A673 (cell line): ENCODE measurements at regions of chr1 and their contacts with region 1.

Region 1: DNA sequence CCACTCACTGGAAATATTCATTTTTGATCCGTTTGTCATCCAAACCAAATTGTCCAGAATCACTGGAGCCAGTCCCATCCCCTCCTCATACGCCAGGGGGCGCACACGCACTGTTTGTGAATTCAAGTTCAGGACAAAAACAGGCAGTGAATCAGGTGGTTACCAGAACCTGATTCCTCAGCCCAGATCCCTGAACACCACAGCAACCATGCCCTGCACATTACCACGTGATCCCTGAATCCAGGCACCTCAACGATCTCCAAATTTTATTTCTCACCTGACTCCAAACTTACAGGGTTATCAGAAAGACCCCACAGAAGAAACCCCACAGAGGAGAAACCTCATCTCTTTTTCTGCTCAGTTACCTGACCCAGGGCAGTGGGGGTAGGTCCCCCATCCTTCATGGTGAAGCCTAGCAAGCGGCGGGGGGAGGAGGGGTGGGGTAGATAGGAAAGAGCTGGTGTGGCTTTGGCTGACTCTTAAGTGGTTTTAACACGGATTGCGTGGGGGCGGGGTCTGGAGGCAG is 1.4 kb upstream of the PTPRF start:
- DNase-seq: peak; percentile 88
- H3K4me3 ChIP-seq: no peak overlapping the region
- H3K27ac ChIP-seq: no peak overlapping the region
- H3K4me1 ChIP-seq: peaks cover 17% of the 10 kb centered on the region
- H3K27me3 ChIP-seq: no peaks in the 10 kb centered on the region
- CTCF ChIP-seq: peak; percentile 97

Region 2: DNA sequence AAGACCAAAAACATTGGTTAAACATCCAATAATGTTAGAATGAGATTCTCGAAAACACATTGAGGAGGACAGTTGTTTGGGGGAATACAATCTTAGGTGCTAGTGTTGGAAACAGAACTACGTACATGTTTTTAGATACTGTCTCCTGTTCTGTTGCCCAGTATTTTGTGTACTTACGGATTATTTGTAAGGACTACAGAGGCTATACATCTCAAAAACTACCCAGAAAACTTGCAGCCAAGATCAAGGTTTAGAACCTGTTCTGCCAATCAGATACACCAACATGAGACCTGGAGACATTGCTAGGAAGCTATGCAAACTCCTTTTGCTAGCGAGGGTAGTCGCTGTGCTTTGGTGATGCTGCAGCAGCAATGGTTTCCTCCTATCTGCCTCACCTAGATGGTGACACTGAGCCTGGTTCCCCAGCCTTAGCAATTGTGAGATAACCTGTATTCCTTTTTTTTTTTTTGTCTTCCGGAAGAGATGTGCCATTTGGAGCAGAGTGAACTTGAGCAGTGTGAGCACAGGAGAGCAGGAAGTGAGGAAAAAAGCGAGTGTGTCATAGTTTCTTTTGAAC is 825.3 kb before region 1 on chr1:
- CTCF ChIA-PET with region 1: no interaction called
- POLR2A ChIA-PET with region 1: no interaction called
- intact Hi-C with region 1: no loop called
- DNase-seq: no peak
- H3K4me3 ChIP-seq: no peak overlapping the region
- H3K27ac ChIP-seq: no peak overlapping the region
- H3K4me1 ChIP-seq: no peaks in the 10 kb centered on the region
- H3K27me3 ChIP-seq: no peaks in the 10 kb centered on the region
- CTCF ChIP-seq: no peak

Region 3: DNA sequence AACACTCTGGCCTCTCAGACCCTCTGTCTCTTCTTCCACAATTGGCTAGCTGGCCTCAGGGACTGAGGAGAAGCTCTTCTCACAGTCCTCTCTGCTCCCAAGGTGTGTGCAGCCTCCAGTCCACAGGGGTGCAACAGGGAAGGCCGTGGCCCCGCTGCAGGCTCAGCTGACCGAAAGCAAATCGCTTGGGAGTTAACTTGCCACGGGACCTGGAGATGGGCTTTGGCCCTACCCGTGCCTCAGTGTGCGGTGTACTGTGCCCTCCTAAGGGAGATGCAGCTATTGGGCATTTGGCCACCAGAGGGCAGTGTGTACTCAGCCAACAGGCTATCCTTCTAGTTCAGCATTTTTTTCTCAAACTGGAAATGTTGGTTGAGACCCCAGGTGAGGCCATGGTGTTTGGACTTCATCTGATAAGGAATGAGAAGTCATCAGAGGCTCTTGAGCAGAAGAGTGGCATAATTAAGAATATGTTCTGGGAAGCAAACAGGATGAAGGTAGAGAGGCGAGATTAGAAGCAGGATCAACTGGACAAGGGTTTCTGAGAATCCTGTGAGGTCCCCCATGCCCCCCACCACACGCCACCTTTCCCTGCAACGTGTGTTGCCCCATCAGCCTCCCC is 302.0 kb before region 1 on chr1:
- CTCF ChIA-PET with region 1: no interaction called
- POLR2A ChIA-PET with region 1: no interaction called
- intact Hi-C with region 1: loop called (anchors 10 kb)
- DNase-seq: peak; percentile 82
- H3K4me3 ChIP-seq: no peak overlapping the region
- H3K27ac ChIP-seq: no peak overlapping the region
- H3K4me1 ChIP-seq: no peaks in the 10 kb centered on the region
- H3K27me3 ChIP-seq: no peaks in the 10 kb centered on the region
- CTCF ChIP-seq: peak; percentile 96

Region 4: DNA sequence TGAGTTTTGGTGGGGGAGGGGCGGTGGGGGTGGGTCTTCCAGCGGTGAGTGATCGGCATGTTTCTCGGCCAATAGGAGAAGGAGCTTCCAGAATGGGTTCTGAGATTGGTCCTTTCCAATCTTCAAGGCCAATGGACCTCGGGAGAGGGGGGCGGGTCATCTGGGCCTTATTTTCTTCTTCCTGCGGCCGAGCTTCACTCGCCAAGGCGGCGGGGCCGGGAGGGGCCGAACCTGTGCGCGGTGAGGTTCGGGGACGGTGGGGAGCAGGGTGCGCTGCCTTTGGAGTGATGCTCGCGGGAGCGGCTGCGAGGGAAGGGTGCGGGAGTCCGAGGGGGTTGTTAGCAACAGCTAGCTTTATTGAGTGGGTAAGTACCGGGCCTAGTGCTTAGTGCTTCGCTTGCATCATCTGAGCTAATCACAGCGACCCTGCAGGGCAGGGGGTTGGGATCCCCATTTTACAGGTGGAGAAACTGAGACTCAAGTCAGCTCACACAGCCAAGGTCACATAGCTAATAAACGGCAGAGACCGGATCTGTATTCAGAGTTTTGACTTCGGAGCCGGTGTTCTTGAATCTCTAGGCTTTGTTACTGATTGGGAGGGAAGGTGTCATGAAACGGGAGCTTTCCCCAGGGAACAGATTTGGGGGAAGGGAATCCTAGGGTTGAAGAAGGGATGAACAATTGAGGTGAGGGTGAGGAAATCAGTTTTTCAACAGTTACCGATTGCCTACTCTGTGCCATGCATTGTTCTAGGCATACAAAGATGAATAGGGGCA is 121.2 kb after region 1 on chr1:
- CTCF ChIA-PET with region 1: interaction called, 3 read pairs
- POLR2A ChIA-PET with region 1: no interaction called
- intact Hi-C with region 1: loop called (anchors 2 kb)
- DNase-seq: peak; percentile 98
- H3K4me3 ChIP-seq: peak overlapping the region; percentile 82
- H3K27ac ChIP-seq: peak overlapping the region; percentile 88
- H3K4me1 ChIP-seq: peaks cover 10% of the 10 kb centered on the region
- H3K27me3 ChIP-seq: no peaks in the 10 kb centered on the region
- CTCF ChIP-seq: no peak

Region 5: GRCh38 chr1:43678940-43679339 is 149.7 kb after region 1 on chr1:
- CTCF ChIA-PET with region 1: no interaction called
- POLR2A ChIA-PET with region 1: no interaction called
- intact Hi-C with region 1: no loop called
- DNase-seq: no peak
- H3K4me3 ChIP-seq: no peak overlapping the region
- H3K27ac ChIP-seq: no peak overlapping the region
- H3K4me1 ChIP-seq: no peaks in the 10 kb centered on the region
- H3K27me3 ChIP-seq: no peaks in the 10 kb centered on the region
- CTCF ChIP-seq: no peak

Region 6: GRCh38 chr1:43934101-43934985 is 405.1 kb after region 1 on chr1:
- CTCF ChIA-PET with region 1: interaction called, 5 read pairs
- POLR2A ChIA-PET with region 1: no interaction called
- intact Hi-C with region 1: loop called (anchors 2 kb)
- DNase-seq: peak; percentile 89
- H3K4me3 ChIP-seq: peak overlapping the region; percentile 53
- H3K27ac ChIP-seq: peak overlapping the region; percentile 63
- H3K4me1 ChIP-seq: peaks cover 32% of the 10 kb centered on the region
- H3K27me3 ChIP-seq: no peaks in the 10 kb centered on the region
- CTCF ChIP-seq: peak; percentile 91

Region 7: GRCh38 chr1:44036409-44037139 is 507.3 kb after region 1 on chr1:
- CTCF ChIA-PET with region 1: no interaction called
- POLR2A ChIA-PET with region 1: no interaction called
- intact Hi-C with region 1: loop called (anchors 2 kb)
- DNase-seq: peak; percentile 87
- H3K4me3 ChIP-seq: no peak overlapping the region
- H3K27ac ChIP-seq: peak overlapping the region; percentile 28
- H3K4me1 ChIP-seq: peaks cover 26% of the 10 kb centered on the region
- H3K27me3 ChIP-seq: no peaks in the 10 kb centered on the region
- CTCF ChIP-seq: peak; percentile 93

Region 8: GRCh38 chr1:44390277-44390676 is 861.0 kb after region 1 on chr1:
- CTCF ChIA-PET with region 1: no interaction called
- POLR2A ChIA-PET with region 1: no interaction called
- intact Hi-C with region 1: no loop called
- DNase-seq: no peak
- H3K4me3 ChIP-seq: no peak overlapping the region
- H3K27ac ChIP-seq: no peak overlapping the region
- H3K4me1 ChIP-seq: no peaks in the 10 kb centered on the region
- H3K27me3 ChIP-seq: peaks cover 36% of the 10 kb centered on the region
- CTCF ChIP-seq: no peak